ENCODE measurements at regions of chr9 and their contacts with region 1.

Region 1: DNA sequence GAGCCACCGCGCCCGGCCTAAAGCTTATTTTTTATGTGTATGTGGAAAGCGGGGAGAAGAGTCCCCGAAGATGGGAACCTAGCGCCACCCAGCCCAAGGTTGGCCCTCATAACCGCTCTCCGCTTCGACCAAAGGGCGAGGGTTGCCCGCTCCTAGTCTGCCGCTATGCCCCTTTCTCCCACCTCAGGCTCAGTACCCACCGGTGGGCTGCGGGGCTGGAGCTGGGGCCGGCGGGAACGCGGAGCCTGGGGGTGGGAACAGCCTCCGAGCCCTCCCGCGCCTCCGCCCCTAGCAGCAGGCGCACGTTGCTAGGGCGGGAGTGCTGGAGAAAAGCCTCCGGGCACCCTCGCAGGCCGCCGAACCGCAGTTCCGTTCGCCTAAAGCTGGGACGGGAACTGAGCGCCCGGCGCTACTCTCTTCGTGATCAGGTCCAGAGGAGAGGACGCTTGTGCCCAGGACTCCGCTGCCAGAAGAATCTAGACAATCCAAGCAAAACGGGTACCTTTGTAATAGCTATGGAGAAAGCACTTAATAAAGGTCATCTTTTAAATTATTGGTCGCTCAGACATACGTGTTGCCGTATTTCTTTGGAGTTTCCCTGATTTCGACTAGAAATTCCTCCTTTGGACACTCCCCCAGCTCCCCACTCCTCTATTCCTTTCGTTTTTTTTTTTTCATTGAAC is at the start of gene WDR31:
- DNase-seq: peak; percentile 95
- H3K4me3 ChIP-seq: peak within 1 kb of the TSS; percentile 71 to 75 (median 73)
- H3K27ac ChIP-seq: peak within 1 kb of the TSS; percentile 76 to 88 (median 86)
- H3K4me1 ChIP-seq: peaks cover 19 to 31% (median 30%) of the 10 kb centered on the region in 4 donors
- H3K27me3 ChIP-seq: no peaks in the 10 kb centered on the region
- CTCF ChIP-seq: no peak
- EP300 ChIP-seq: no peak
- POLR2A ChIP-seq: no peak
- total RNA-seq, gene WDR31: 1.3 to 2.8 (median 2.1) TPM

Region 2: GRCh38 chr9:113275157-113276131 is 64.7 kb before region 1 on chr9 and contains the starts of genes CDC26 and PRPF4:
- intact Hi-C with region 1: loop called (anchors 2 kb)
- DNase-seq: peak; percentile 100
- H3K4me3 ChIP-seq: peak within 1 kb of the TSS; percentile 68 to 90 (median 82)
- H3K27ac ChIP-seq: peak within 1 kb of the TSS; percentile 93 to 98 (median 94)
- H3K4me1 ChIP-seq: peaks cover 30 to 43% (median 33%) of the 10 kb centered on the region in 4 donors
- H3K27me3 ChIP-seq: no peaks in the 10 kb centered on the region
- CTCF ChIP-seq: peak in 1 of 3 experiments; percentile 4
- EP300 ChIP-seq: no peak
- POLR2A ChIP-seq: peak; percentile 86
- total RNA-seq, gene CDC26: 41.5 to 77.2 (median 48.5) TPM
- total RNA-seq, gene PRPF4: 12.0 to 18.1 (median 16.3) TPM

Region 3: GRCh38 chr9:113376634-113377567 is 36.7 kb after region 1 on chr9 and contains the start of gene HDHD3:
- intact Hi-C with region 1: loop called (anchors 5 kb)
- DNase-seq: peak; percentile 96
- H3K4me3 ChIP-seq: peak within 1 kb of the TSS; percentile 82 to 95 (median 87)
- H3K27ac ChIP-seq: peak within 1 kb of the TSS; percentile 81 to 90 (median 86)
- H3K4me1 ChIP-seq: peaks cover 12 to 23% (median 20%) of the 10 kb centered on the region in 4 donors
- H3K27me3 ChIP-seq: no peaks in the 10 kb centered on the region
- CTCF ChIP-seq: no peak
- EP300 ChIP-seq: no peak
- POLR2A ChIP-seq: no peak
- total RNA-seq, gene HDHD3: 9.1 to 30.2 (median 22.8) TPM

Region 4: DNA sequence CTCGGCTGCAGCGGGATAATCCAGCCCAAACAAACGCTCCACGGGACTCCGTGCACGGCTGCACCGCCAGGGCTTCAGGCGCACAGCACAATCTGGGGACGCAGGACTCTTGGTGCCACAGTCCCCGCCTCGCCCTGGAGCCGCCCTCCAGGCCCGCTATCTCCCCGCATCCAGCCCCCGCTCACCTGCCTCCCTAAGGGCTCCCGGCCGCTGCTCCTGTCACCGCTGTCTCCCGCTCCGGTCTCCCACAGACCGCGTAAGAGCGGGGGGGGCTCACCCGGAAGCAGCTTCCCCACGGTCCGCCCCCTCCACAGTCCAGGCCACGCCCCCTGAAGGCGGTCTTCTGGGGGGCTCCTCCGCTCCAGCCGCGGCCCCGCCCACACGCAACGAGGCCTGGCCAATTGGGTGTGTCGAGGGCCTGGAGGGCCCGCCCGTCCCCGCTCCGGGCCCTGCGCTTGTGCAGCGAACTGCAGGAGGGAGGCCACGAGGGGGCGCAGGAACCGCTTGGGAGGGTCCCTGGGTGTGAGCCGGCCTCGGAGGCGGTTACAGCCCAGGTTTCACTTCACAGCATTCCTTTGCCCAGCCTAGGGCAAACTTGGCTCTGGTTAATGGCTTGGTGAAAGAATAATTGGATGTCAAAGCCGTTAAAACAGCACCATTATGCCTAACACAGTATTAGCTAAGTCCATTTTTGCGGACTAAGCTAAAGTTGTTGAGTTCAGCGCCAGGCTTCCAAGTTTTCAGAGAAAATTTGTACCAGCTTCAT is 61.1 kb after region 1 on chr9 and contains the start of gene ALAD:
- intact Hi-C with region 1: loop called (anchors 10 kb)
- DNase-seq: peak; percentile 99
- H3K4me3 ChIP-seq: peak within 1 kb of the TSS; percentile 79 to 95 (median 83)
- H3K27ac ChIP-seq: peak within 1 kb of the TSS; percentile 70 to 82 (median 76)
- H3K4me1 ChIP-seq: peaks cover 26 to 27% (median 27%) of the 10 kb centered on the region in 4 donors
- H3K27me3 ChIP-seq: no peaks in the 10 kb centered on the region
- CTCF ChIP-seq: peak; percentile 87 to 97 (median 94)
- EP300 ChIP-seq: no peak
- POLR2A ChIP-seq: no peak
- total RNA-seq, gene ALAD: 18.2 to 31.1 (median 28.6) TPM